CD8-positive, alpha-beta T cell (primary cell): ENCODE measurements at regions of chr13 and their contacts with region 1.

Region 1: DNA sequence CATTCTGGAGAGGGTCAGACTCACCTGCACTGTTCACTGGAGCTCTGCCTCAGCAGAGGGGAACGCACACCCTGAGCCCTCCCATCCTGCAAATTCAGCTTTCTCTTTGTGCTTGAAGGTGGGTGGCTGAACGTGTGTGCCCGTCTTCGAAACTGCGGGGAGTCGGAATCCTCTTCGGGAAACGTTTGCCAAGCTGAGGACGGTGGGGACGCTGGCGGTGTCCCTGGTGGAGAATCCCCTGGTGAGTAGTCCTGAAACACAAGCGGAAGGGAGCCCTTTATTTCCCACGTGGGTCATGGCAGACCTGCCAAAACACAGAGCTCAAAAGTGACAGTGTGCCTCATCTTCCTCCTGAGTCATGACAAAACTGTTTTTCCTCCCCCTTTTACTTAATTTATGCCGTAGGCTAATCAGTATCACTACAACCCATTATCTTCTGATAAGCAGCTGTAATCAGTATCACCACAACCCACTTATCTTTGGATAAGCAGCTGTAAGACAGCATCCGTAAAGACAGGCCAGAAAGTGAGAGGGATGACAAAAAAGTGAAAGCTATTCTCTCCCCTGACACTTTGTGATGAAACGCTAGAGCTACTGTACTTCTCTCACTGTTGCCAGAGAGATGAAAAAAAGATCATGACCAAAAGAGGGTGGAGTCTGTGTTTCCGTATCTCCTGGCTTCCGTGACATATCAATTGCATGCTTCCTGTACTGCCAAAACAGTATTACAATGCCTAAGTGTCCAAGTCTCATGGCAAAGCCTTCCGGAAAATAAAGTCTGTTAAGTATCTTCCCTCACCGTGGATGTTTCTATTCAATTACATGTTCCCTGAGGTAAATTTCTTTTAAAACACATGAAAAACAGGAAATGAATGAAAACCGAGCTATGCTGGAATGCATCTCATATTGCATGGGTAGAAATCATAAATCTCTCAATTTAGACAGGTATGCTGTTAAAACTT is 155.5 kb downstream of the TBC1D4 start:
- DNase-seq: peak in 8 of 9 experiments; percentile 21 to 88 (median 46)
- ATAC-seq: peak; percentile 90
- H3K4me3 ChIP-seq: peak overlapping the region; percentile 55 to 65
- H3K4me3 Mint-ChIP-seq: peak overlapping the region; percentile 90
- H3K27ac ChIP-seq: peak overlapping the region; percentile 85 to 93
- H3K27ac Mint-ChIP-seq: peak overlapping the region; percentile 98
- H3K4me1 ChIP-seq: peaks cover 28% of the 10 kb centered on the region
- H3K4me1 Mint-ChIP-seq: peaks cover 48% of the 10 kb centered on the region
- H3K27me3 ChIP-seq: no peaks in the 10 kb centered on the region
- H3K27me3 Mint-ChIP-seq: no peaks in the 10 kb centered on the region
- CTCF ChIP-seq: no peak

Region 2: DNA sequence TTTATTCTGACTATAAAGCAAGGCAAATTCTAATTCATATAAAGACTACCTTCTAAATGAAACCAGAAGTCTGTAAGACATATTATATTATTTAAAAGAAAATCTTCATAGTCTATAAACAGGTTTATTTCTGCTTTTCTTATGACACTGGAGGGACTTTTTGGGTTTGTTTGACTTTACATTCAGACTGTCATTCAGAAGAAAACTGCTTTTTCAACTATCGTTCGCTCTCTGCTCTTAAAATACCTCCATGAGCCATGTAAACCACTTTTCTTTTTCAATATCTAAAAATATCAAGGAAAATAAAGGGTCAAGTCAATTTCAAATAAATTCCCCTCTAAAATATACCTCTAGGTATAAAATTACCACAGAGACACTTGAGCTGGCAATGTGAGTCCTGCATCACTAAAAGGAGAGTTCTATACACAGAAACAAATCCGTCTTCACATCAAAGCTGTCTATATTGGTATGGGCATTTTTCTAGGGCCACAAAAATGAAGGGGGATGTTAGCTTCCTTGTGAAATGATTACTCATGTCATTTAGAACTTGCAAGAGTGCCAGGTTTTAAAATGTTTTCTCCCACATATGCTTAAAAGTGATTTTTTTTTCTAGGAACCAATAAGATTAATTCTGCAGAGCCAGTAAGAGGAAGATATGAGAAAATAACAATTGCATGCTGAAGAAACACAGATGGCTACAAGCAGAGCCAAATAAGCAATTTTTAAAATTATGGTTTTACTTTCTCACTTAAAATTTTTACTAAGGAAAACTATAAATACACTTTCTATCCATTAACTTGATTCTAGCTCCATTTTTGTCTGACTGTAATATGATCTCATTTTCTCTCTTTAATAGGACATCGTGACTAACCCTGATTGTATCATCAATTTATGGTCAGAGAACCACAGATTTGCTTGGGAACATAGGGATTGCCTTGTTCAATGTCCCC is 26.3 kb before region 1 on chr13:
- CTCF ChIA-PET with region 1: no interaction called
- POLR2A ChIA-PET with region 1: interaction called, 4 read pairs
- intact Hi-C with region 1: loop called in 1 of 2 experiments (anchors 5 kb)
- DNase-seq: peak in 2 of 9 experiments; percentile 22 to 35
- ATAC-seq: peak; percentile 63
- H3K4me3 ChIP-seq: no peak overlapping the region
- H3K4me3 Mint-ChIP-seq: no peak overlapping the region
- H3K27ac ChIP-seq: no peak overlapping the region
- H3K27ac Mint-ChIP-seq: peak overlapping the region; percentile 18
- H3K4me1 ChIP-seq: peaks cover 5% of the 10 kb centered on the region
- H3K4me1 Mint-ChIP-seq: peaks cover 27% of the 10 kb centered on the region
- H3K27me3 ChIP-seq: no peaks in the 10 kb centered on the region
- H3K27me3 Mint-ChIP-seq: no peaks in the 10 kb centered on the region
- CTCF ChIP-seq: no peak

Region 3: GRCh38 chr13:75357576-75358289 is 31.3 kb after region 1 on chr13:
- CTCF ChIA-PET with region 1: interaction called, 13 read pairs
- POLR2A ChIA-PET with region 1: interaction called, 3 read pairs
- intact Hi-C with region 1: loop called in 1 of 2 experiments (anchors 1 kb)
- DNase-seq: peak; percentile 6 to 76 (median 46)
- ATAC-seq: peak; percentile 100
- H3K4me3 ChIP-seq: no peak overlapping the region
- H3K4me3 Mint-ChIP-seq: no peak overlapping the region
- H3K27ac ChIP-seq: no peak overlapping the region
- H3K27ac Mint-ChIP-seq: no peak overlapping the region
- H3K4me1 ChIP-seq: no peaks in the 10 kb centered on the region
- H3K4me1 Mint-ChIP-seq: peaks cover 5% of the 10 kb centered on the region
- H3K27me3 ChIP-seq: no peaks in the 10 kb centered on the region
- H3K27me3 Mint-ChIP-seq: no peaks in the 10 kb centered on the region
- CTCF ChIP-seq: peak; percentile 90

Region 4: GRCh38 chr13:75760131-75761021 is 433.9 kb after region 1 on chr13:
- CTCF ChIA-PET with region 1: no interaction called
- POLR2A ChIA-PET with region 1: no interaction called
- intact Hi-C with region 1: loop called (anchors 10 kb)
- DNase-seq: peak in 4 of 9 experiments; percentile 10 to 60 (median 46)
- ATAC-seq: peak; percentile 71
- H3K4me3 ChIP-seq: peak overlapping the region; percentile 32 to 40
- H3K4me3 Mint-ChIP-seq: peak overlapping the region; percentile 83
- H3K27ac ChIP-seq: peak overlapping the region in 1 of 2 experiments; percentile 50
- H3K27ac Mint-ChIP-seq: peak overlapping the region; percentile 84
- H3K4me1 ChIP-seq: peaks cover 34% of the 10 kb centered on the region
- H3K4me1 Mint-ChIP-seq: peaks cover 59% of the 10 kb centered on the region
- H3K27me3 ChIP-seq: no peaks in the 10 kb centered on the region
- H3K27me3 Mint-ChIP-seq: no peaks in the 10 kb centered on the region
- CTCF ChIP-seq: peak; percentile 17